ENCODE measurements at regions of chr1 and their contacts with region 1.

Region 1: GRCh38 chr1:235504496-235505222 is 407 bp upstream of the B3GALNT2 start:
- DNase-seq: peak; percentile 99
- ATAC-seq: peak; percentile 83
- H3K4me3 ChIP-seq: peak overlapping the region; percentile 41 to 97 (median 93)
- H3K4me3 Mint-ChIP-seq: peak overlapping the region; percentile 99
- H3K27ac ChIP-seq: peak overlapping the region; percentile 85 to 92
- H3K27ac Mint-ChIP-seq: peak overlapping the region; percentile 90
- H3K4me1 ChIP-seq: peaks cover 7 to 12% of the 10 kb centered on the region in 2 donors
- H3K4me1 Mint-ChIP-seq: peaks cover 24% of the 10 kb centered on the region
- H3K27me3 ChIP-seq: no peaks in the 10 kb centered on the region
- H3K27me3 Mint-ChIP-seq: peaks cover 3% of the 10 kb centered on the region
- CTCF ChIP-seq: peak; percentile 90

Region 2: DNA sequence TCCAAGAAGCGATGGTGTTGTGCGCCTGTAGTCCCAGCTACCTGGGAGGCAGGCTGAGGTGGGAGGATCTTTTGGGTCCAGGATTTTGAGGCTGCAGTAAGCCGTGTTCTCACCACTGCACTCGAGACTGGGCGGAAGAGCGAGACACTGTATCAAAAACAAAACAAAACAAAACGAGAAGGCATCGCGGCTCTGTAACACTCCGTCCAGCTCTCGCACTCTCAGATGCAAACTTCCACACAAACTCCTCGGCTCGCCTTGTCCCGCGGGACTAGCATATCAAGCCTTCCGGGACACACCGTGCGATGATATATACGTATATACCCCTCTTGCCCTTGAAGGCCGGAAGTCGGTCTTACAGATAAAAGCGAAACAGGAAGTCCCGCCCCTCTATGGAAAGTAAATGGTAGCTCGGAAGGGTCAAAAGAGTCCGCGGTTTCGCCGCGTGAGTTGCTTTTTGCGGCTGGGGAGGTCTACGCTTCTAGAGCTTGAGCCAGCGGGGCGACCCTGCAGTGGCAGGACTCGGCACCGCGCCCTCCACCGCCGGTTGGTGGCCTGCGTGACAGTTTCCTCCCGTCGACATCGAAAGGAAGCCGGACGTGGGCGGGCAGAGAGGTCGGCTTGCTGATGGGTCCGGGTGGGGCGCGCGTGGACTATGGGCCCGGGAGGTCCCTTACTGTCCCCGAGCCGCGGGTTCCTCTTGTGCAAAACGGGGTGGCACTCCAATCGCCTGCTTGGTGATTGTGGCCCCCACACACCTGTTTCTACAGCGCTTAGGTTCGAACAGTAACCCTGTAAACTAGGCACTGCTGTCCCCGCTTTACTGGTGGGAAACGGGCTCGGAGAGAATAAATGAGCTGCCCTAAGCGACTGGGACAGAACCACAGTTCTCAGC is 1131.3 kb before region 1 on chr1 and contains the start of gene COA6:
- CTCF ChIA-PET with region 1: interaction called, 3 read pairs
- POLR2A ChIA-PET with region 1: no interaction called
- intact Hi-C with region 1: loop called (anchors 1 kb)
- DNase-seq: peak; percentile 99
- ATAC-seq: peak; percentile 85
- H3K4me3 ChIP-seq: peak within 1 kb of the TSS; percentile 60 to 96 (median 86)
- H3K4me3 Mint-ChIP-seq: peak within 1 kb of the TSS; percentile 100
- H3K27ac ChIP-seq: peak within 1 kb of the TSS; percentile 91 to 96
- H3K27ac Mint-ChIP-seq: peak within 1 kb of the TSS; percentile 100
- H3K4me1 ChIP-seq: peaks cover 13 to 16% of the 10 kb centered on the region in 2 donors
- H3K4me1 Mint-ChIP-seq: peaks cover 33% of the 10 kb centered on the region
- H3K27me3 ChIP-seq: no peaks in the 10 kb centered on the region
- H3K27me3 Mint-ChIP-seq: no peaks in the 10 kb centered on the region
- CTCF ChIP-seq: no peak
- total RNA-seq, gene COA6: 12.5 and 14.8 TPM in 2 replicates

Region 3: DNA sequence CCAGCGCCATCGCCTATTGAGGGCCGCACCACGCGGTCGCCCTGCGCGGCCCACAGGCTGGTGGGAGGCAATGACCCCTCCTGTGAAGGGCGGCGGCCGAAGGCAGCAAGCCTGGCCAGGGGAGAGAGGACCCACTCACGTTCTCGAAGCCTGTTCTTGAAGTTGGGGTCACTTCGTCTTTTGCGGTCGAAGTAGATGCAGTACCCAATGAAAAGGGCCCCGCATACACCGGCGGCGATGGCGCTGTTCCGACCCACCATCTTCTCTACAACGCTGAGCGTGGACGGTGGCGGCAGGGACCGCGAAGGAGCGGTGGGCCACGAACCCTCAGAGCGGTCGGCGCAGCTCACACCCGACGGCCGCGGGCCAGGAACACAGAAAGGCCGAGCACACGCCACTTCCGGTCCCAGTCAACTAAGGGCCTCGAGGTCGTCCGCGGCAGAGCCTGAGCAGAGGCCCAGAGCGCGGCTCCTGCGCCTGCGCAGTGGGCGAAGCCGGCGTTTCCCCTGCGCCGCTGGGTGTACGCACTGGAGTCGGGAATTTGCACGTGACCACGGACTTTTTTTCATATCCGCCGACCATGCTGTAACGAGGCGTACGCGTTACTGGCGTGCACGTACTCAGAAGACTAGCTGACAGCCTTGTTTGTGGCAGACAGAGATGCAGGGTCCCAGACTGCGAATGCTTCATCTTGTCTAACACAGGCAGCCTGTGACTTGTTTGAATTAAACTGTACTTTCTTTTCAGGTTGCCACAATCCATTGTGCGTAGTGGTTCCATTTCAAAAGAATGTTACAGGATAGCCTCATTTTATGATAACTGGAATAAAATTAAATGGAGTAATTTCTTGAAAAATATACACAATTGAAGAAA is 376.0 kb before region 1 on chr1 and contains the start of gene TOMM20:
- CTCF ChIA-PET with region 1: no interaction called
- POLR2A ChIA-PET with region 1: no interaction called
- intact Hi-C with region 1: loop called (anchors 10 kb)
- DNase-seq: peak; percentile 97
- ATAC-seq: peak; percentile 93
- H3K4me3 ChIP-seq: peak within 1 kb of the TSS; percentile 72 to 99 (median 89)
- H3K4me3 Mint-ChIP-seq: peak within 1 kb of the TSS; percentile 97
- H3K27ac ChIP-seq: peak within 1 kb of the TSS; percentile 84 to 95
- H3K27ac Mint-ChIP-seq: peak within 1 kb of the TSS; percentile 99
- H3K4me1 ChIP-seq: peaks cover 16 to 20% of the 10 kb centered on the region in 2 donors
- H3K4me1 Mint-ChIP-seq: peaks cover 35% of the 10 kb centered on the region
- H3K27me3 ChIP-seq: no peaks in the 10 kb centered on the region
- H3K27me3 Mint-ChIP-seq: no peaks in the 10 kb centered on the region
- CTCF ChIP-seq: no peak
- total RNA-seq, gene TOMM20: 73.5 and 77.3 TPM in 2 replicates

Region 4: DNA sequence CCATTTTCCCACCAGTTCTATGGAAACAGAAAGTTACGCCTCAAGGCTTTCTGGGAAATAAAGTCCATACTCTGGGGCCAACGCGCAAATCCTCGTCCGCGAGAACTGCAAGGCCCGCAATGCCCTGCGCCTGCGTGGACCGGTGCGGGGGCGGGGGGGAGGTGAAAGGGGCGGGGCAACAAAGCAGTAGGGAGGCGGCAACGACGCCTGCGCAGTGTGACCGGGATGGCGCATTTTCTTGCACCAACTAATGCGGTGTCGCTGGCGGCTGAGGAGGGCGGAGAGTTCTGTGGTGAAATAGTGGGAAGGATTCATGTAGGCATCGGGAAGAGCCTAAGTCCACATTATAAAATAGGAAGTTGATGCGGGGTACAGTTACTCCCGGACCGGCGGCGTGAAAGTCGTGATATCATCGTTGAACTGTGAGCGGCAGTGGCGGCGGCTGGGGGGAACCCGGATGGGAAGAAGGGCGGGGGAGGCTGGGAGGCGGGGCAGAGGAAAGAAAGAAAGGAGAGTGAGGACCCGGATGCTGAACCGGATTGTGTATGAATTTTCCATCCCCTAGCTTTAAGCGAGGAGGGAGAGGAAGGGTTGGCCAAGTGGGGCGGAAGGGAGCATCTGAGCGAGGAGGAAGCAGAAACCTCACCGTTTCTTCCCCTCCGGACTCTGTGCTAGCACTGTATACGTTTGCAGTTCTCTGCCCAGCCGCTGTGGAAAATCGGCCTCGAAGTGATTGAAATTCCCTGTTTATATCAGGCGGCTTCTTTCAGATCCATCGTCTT is 176.1 kb before region 1 on chr1 and contains the start of gene GGPS1:
- CTCF ChIA-PET with region 1: interaction called, 3 read pairs
- POLR2A ChIA-PET with region 1: no interaction called
- intact Hi-C with region 1: loop called (anchors 1 kb)
- DNase-seq: peak; percentile 98
- ATAC-seq: peak; percentile 75
- H3K4me3 ChIP-seq: peak within 1 kb of the TSS; percentile 89 to 99 (median 99)
- H3K4me3 Mint-ChIP-seq: no peak within 1 kb of the TSS
- H3K27ac ChIP-seq: peak within 1 kb of the TSS; percentile 89 to 98
- H3K27ac Mint-ChIP-seq: no peak within 1 kb of the TSS
- H3K4me1 ChIP-seq: peaks cover 33 to 58% of the 10 kb centered on the region in 2 donors
- H3K4me1 Mint-ChIP-seq: peaks cover 53% of the 10 kb centered on the region
- H3K27me3 ChIP-seq: no peaks in the 10 kb centered on the region
- H3K27me3 Mint-ChIP-seq: no peaks in the 10 kb centered on the region
- CTCF ChIP-seq: peak; percentile 36
- total RNA-seq, gene GGPS1: 43.6 and 46.8 TPM in 2 replicates

Region 5: DNA sequence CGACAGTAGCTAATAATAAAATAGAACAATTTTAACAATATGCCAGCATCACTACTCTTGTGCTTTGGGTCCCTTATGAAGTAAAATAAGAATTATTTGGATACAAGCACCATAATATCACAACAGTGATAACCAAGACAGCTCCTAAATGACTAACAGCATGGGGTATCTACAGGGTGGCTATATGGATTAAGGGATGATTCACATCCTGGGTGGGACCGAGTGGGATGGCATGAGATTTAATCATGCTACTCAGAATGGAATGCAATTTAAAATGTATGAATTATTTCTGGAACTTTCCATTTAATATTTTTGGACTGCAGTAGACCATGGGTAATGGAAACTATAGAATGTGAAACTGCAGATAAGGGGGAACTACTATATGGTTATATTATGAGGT is 27.7 kb after region 1 on chr1:
- CTCF ChIA-PET with region 1: no interaction called
- POLR2A ChIA-PET with region 1: no interaction called
- intact Hi-C with region 1: no loop called
- DNase-seq: no peak
- ATAC-seq: no peak
- H3K4me3 ChIP-seq: no peak overlapping the region
- H3K4me3 Mint-ChIP-seq: no peak overlapping the region
- H3K27ac ChIP-seq: no peak overlapping the region
- H3K27ac Mint-ChIP-seq: no peak overlapping the region
- H3K4me1 ChIP-seq: no peaks in the 10 kb centered on the region
- H3K4me1 Mint-ChIP-seq: no peaks in the 10 kb centered on the region
- H3K27me3 ChIP-seq: no peaks in the 10 kb centered on the region
- H3K27me3 Mint-ChIP-seq: peaks cover 7% of the 10 kb centered on the region
- CTCF ChIP-seq: no peak

Region 6: DNA sequence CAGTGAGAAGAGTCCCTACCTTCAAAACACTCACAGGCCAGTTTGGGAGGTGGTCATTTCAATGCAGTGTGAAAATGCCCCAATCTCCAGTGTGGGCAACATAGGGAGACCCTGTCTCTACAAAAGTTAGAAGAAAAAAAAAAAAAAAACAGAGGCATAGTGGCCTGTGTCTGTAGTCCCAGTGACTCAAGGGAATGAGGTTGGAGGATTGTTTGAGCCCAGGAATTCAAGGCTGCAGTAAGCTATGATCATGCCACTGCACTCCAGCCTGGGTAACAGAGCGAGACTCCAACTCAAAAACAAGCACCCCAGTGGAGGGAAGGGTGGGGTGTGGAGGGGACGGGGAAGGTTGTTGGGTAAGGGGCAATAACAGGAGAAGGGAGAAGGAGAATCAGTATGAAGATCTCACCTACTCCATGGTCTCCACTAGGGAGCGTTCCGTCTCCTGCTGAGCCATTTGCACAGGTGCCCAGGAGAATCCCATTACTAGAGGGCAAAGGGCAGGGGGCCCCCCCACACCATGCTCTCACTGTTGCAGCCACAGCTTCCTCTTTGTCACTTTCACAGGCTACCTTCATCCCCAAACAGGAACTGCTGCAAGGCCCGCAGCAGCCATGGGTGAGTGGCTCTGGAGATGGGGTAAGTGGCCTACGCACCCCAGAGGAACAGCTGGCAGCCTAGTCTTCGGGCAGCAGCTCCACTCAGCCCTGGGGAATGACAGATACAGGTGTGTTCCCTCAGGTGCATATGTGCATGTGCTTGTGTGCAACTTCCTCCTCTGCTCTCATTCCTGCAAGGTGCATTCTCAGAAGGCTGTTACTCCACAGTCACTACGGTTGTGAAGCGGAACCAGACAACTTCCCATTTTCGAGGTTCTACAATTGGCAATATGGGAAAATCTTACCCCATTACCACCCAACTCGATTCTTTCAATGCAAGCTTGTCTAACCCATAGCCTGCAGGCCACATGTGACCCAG is 449.9 kb after region 1 on chr1:
- CTCF ChIA-PET with region 1: interaction called, 3 read pairs
- POLR2A ChIA-PET with region 1: no interaction called
- intact Hi-C with region 1: loop called (anchors 5 kb)
- DNase-seq: peak; percentile 95
- ATAC-seq: peak; percentile 88
- H3K4me3 ChIP-seq: peak overlapping the region in 3 of 5 experiments; percentile 18 to 37 (median 32)
- H3K4me3 Mint-ChIP-seq: peak overlapping the region; percentile 72
- H3K27ac ChIP-seq: peak overlapping the region; percentile 70 to 78
- H3K27ac Mint-ChIP-seq: peak overlapping the region; percentile 82
- H3K4me1 ChIP-seq: peaks cover 57 to 61% of the 10 kb centered on the region in 2 donors
- H3K4me1 Mint-ChIP-seq: peaks cover 71% of the 10 kb centered on the region
- H3K27me3 ChIP-seq: no peaks in the 10 kb centered on the region
- H3K27me3 Mint-ChIP-seq: no peaks in the 10 kb centered on the region
- CTCF ChIP-seq: no peak

Region 7: DNA sequence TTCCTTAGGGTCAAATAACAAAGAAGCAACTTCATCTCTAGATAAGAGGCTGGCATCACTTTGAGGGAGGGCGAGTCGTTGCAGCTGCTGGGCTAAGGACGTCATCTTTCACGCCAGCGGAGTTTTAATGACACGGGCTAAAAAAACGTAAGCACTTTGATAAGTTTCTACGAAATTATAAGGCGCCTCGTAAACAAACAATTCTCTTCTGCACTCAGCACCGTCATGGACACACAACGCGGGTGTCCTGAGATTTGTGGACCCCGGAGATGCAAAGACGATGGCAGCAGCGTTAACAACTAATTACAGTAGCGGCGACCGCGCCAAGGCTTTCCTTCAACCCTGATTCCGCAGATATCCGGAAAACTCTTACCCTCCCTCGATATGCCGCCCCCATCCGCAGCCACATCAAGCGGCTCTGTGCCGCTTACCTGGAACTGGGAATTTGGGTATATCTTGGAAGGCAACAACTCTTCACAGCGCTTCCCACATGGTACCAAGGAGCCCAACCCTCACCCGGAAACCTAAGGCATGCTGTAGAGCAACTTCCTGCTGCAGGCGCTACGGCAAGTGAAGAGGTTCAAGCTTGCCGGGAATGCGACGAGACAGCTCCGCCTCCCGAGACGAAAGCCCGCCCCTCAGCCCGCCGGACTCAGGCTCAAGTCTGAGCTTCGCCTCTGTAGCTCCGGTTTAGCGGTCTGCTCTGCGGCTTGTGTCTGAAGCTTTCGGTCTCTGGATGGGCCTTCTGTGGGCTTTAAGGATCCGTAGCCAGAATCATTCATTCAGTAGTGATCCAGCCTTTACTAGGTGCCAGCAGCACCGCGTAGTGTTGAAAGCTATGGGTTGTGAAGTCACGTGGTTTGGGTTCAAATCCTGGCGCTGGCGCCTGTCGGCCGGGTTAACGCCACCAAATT is 1099.6 kb after region 1 on chr1 and contains the start of gene HEATR1:
- CTCF ChIA-PET with region 1: no interaction called
- POLR2A ChIA-PET with region 1: no interaction called
- intact Hi-C with region 1: loop called (anchors 10 kb)
- DNase-seq: peak; percentile 92
- ATAC-seq: peak; percentile 97
- H3K4me3 ChIP-seq: peak within 1 kb of the TSS; percentile 77 to 99 (median 80)
- H3K4me3 Mint-ChIP-seq: peak within 1 kb of the TSS; percentile 99
- H3K27ac ChIP-seq: peak within 1 kb of the TSS; percentile 26 to 47
- H3K27ac Mint-ChIP-seq: peak within 1 kb of the TSS; percentile 97
- H3K4me1 ChIP-seq: peaks cover 15 to 16% of the 10 kb centered on the region in 2 donors
- H3K4me1 Mint-ChIP-seq: peaks cover 32% of the 10 kb centered on the region
- H3K27me3 ChIP-seq: peaks cover 0 to 9% (median 4%) of the 10 kb centered on the region in 4 experiments
- H3K27me3 Mint-ChIP-seq: peaks cover 11% of the 10 kb centered on the region
- CTCF ChIP-seq: no peak
- total RNA-seq, gene HEATR1: 50.6 and 56.0 TPM in 2 replicates